ENCODE measurements at regions of chr6 and their contacts with region 1.

Region 1: DNA sequence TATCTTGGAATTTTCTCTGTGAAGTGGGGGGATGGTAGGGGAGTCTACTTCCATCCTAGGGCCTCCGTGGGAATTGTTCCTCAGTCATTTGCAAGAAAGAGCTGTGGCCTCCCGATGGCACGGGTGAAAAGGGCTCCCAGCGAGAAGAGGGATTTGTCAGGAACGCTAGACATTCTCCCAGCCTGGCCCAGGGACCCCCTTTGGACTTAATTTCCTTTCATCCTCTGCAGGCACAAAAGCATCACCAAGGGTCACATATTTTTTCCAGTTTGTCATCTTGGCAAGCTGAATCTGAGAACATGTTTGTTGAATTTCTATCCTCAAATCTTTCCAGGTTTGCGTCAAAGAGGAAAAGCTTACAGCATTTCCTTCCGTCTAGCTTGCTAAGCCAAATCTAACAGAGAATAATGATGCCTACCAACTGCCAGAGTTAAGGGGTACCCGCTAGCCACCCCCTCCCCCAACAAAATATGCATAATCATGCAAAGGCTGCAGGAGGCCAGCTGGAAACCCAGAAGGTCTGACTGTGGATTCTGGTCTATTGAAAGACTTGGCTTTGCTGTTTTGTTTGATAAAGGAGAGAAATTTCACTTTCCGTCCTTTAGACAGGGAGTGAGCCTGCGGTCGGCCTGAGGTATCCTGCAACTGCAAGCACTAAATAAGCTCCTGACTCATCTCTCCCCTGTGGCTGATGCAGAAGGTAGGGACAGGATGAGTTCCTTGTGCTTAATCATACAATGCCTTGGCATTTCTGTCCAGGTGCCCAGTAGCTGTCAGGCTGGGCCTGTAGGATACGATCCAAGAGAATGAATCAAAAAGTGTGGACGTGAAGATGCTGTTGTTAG is 23.1 kb downstream of the PSMG4 start:
- DNase-seq: no peak
- ATAC-seq: no peak
- H3K4me3 ChIP-seq: no peak overlapping the region
- H3K27ac ChIP-seq: no peak overlapping the region
- H3K4me1 ChIP-seq: no peaks in the 10 kb centered on the region
- H3K27me3 ChIP-seq: no peaks in the 10 kb centered on the region
- CTCF ChIP-seq: no peak
- EP300 ChIP-seq: no peak
- POLR2A ChIP-seq: 0 out of 4 replicates have a peak, but pooled peaks of 1 of the 2 experiments have one; percentile 10
- RAD21 ChIP-seq: no peak

Region 2: GRCh38 chr6:3251462-3252314 is 30.2 kb before region 1 on chr6:
- CTCF ChIA-PET with region 1: no interaction called
- POLR2A ChIA-PET with region 1: no interaction called
- in situ Hi-C with region 1: no loop called
- intact Hi-C with region 1: no loop called
- DNase-seq: peak; percentile 77
- ATAC-seq: peak; percentile 78
- H3K4me3 ChIP-seq: peak overlapping the region; percentile 6 to 57 (median 20); a peak in 4 of 6 replicates
- H3K27ac ChIP-seq: no peak overlapping the region
- H3K4me1 ChIP-seq: peaks cover 46% of the 10 kb centered on the region
- H3K27me3 ChIP-seq: peaks cover 1 to 50% of the 10 kb centered on the region in 2 experiments; a peak in 3 of 5 replicates
- CTCF ChIP-seq: peak; percentile 96
- EP300 ChIP-seq: peak in 1 of 2 experiments; percentile 35; a peak in 1 of 4 replicates
- POLR2A ChIP-seq: no peak
- RAD21 ChIP-seq: peak; percentile 89

Region 3: GRCh38 chr6:3510178-3510976 is 228.5 kb after region 1 on chr6:
- CTCF ChIA-PET with region 1: interaction called, 5 read pairs
- POLR2A ChIA-PET with region 1: no interaction called
- in situ Hi-C with region 1: loop called (anchors 10 kb)
- intact Hi-C with region 1: loop called (anchors 2 kb)
- DNase-seq: no peak
- ATAC-seq: peak; percentile 51
- H3K4me3 ChIP-seq: peak overlapping the region in 1 of 3 experiments; percentile 21; a peak in 1 of 6 replicates
- H3K27ac ChIP-seq: no peak overlapping the region
- H3K4me1 ChIP-seq: peaks cover 55% of the 10 kb centered on the region
- H3K27me3 ChIP-seq: no peaks in the 10 kb centered on the region
- CTCF ChIP-seq: no peak
- EP300 ChIP-seq: no peak
- POLR2A ChIP-seq: no peak
- RAD21 ChIP-seq: no peak

Region 4: GRCh38 chr6:3518356-3519225 is 236.7 kb after region 1 on chr6:
- CTCF ChIA-PET with region 1: interaction called, 3 read pairs
- POLR2A ChIA-PET with region 1: no interaction called
- in situ Hi-C with region 1: loop called (anchors 10 kb)
- intact Hi-C with region 1: no loop called
- DNase-seq: peak; percentile 44
- ATAC-seq: peak; percentile 88
- H3K4me3 ChIP-seq: peak overlapping the region in 1 of 3 experiments; percentile 31; a peak in 2 of 6 replicates
- H3K27ac ChIP-seq: no peak overlapping the region
- H3K4me1 ChIP-seq: peaks cover 19% of the 10 kb centered on the region
- H3K27me3 ChIP-seq: peaks cover 2 to 49% of the 10 kb centered on the region in 2 experiments; a peak in 3 of 5 replicates
- CTCF ChIP-seq: no peak
- EP300 ChIP-seq: no peak
- POLR2A ChIP-seq: no peak
- RAD21 ChIP-seq: no peak

Region 5: DNA sequence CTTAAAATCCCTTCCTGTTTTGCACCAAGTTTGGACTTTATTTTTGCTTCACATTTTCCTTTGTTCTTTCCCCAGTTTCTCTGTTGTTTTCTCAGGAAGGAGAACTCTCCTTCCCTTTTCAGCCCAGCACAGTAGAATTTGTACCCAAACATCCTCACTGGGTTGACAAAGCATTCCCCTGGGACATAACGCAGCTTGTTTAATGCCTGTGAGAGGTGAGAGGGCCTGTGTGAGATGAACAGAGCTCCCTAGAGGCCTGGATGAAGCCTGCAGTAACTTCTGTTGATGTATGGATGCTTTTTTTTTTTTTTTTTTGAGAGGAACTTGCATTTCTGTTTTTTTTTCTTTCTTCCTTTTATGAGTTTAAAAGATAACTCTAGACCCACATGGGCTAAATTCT is 279.9 kb after region 1 on chr6:
- CTCF ChIA-PET with region 1: no interaction called
- POLR2A ChIA-PET with region 1: no interaction called
- in situ Hi-C with region 1: no loop called
- intact Hi-C with region 1: loop called (anchors 1 kb)
- DNase-seq: peak; percentile 20
- ATAC-seq: peak; percentile 87
- H3K4me3 ChIP-seq: no peak overlapping the region
- H3K27ac ChIP-seq: no peak overlapping the region
- H3K4me1 ChIP-seq: peaks cover 10% of the 10 kb centered on the region
- H3K27me3 ChIP-seq: peaks cover 2 to 13% of the 10 kb centered on the region in 2 experiments; a peak in 1 of 5 replicates
- CTCF ChIP-seq: peak; percentile 21
- EP300 ChIP-seq: no peak
- POLR2A ChIP-seq: no peak
- RAD21 ChIP-seq: no peak

Region 6: GRCh38 chr6:3732345-3733141 is 450.7 kb after region 1 on chr6:
- CTCF ChIA-PET with region 1: interaction called, 41 read pairs
- POLR2A ChIA-PET with region 1: no interaction called
- in situ Hi-C with region 1: loop called (anchors 5 kb)
- intact Hi-C with region 1: loop called (anchors 1 kb)
- DNase-seq: peak; percentile 64
- ATAC-seq: peak; percentile 93
- H3K4me3 ChIP-seq: no peak overlapping the region
- H3K27ac ChIP-seq: no peak overlapping the region
- H3K4me1 ChIP-seq: no peaks in the 10 kb centered on the region
- H3K27me3 ChIP-seq: no peaks in the 10 kb centered on the region
- CTCF ChIP-seq: peak; percentile 99
- EP300 ChIP-seq: no peak
- POLR2A ChIP-seq: no peak
- RAD21 ChIP-seq: peak; percentile 96